Activated CD4-positive, alpha-beta T cell treated with anti-CD3 and anti-CD28 coated beads for 36 hours (primary cell): ENCODE measurements at regions of chr11 and their contacts with region 1.

Region 1: GRCh38 chr11:66288671-66289547 is at the start of gene YIF1A:
- DNase-seq: peak; percentile 99
- ATAC-seq: peak; percentile 97
- H3K4me3 Mint-ChIP-seq: peak within 1 kb of the TSS; percentile 89
- H3K27ac Mint-ChIP-seq: peak within 1 kb of the TSS; percentile 85
- H3K4me1 Mint-ChIP-seq: peaks cover 22% of the 10 kb centered on the region
- H3K27me3 Mint-ChIP-seq: peaks cover 8% of the 10 kb centered on the region
- total RNA-seq, gene YIF1A: 47.5 to 49.8 TPM

Region 2: GRCh38 chr11:65961232-65961901 is 327.5 kb before region 1 on chr11 and contains the start of gene SART1:
- CTCF ChIA-PET with region 1: no interaction called
- POLR2A ChIA-PET with region 1: no interaction called
- intact Hi-C with region 1: loop called in 1 of 2 experiments (anchors 1 kb)
- DNase-seq: peak; percentile 98
- ATAC-seq: peak; percentile 91
- H3K4me3 Mint-ChIP-seq: peak within 1 kb of the TSS; percentile 92
- H3K27ac Mint-ChIP-seq: peak within 1 kb of the TSS; percentile 97
- H3K4me1 Mint-ChIP-seq: peaks cover 37% of the 10 kb centered on the region
- H3K27me3 Mint-ChIP-seq: no peaks in the 10 kb centered on the region
- total RNA-seq, gene SART1: 54.7 to 84.5 TPM

Region 3: DNA sequence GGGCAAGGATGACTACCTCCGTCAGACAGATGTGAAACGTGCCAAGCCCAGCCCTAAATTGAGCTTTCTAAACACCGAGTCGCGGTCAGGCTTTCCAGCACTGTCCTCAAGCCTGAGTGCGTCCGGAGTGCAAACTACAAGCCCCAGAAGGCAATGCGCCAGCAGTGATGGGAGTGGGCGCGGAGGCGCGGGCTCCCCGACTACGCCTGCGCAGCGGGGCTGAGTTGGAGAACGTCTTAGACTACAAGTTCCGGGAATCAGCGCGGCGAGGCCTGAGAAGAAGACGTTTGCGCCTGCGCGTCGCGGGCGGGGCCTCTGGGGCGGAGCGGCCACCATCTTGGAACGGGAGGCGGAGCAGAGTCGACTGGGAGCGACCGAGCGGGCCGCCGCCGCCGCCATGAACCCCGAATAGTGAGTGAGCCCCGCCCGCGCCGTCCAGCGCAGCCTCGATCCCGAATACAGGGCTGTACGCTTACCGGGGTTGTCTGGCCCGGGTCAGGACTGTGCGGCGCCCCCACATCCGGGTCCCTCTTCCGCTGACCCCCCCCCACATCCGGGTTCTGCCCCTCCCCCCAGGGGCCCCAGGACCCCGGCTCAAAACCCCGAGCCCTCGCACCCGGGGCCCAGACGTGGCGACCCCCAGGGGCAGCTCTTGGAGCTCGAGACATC is 20.5 kb before region 1 on chr11 and contains the start of gene RAB1B:
- CTCF ChIA-PET with region 1: no interaction called
- POLR2A ChIA-PET with region 1: interaction called, 5 read pairs
- intact Hi-C with region 1: loop called (anchors 1 kb)
- DNase-seq: peak; percentile 100
- ATAC-seq: peak; percentile 88
- H3K4me3 Mint-ChIP-seq: peak within 1 kb of the TSS; percentile 100
- H3K27ac Mint-ChIP-seq: peak within 1 kb of the TSS; percentile 97
- H3K4me1 Mint-ChIP-seq: peaks cover 28% of the 10 kb centered on the region
- H3K27me3 Mint-ChIP-seq: no peaks in the 10 kb centered on the region
- total RNA-seq, gene RAB1B: 114 to 147 TPM

Region 4: GRCh38 chr11:66344550-66345315 is 55.8 kb after region 1 on chr11 and contains the start of gene BRMS1:
- CTCF ChIA-PET with region 1: interaction called, 3 read pairs
- POLR2A ChIA-PET with region 1: no interaction called
- intact Hi-C with region 1: loop called in 1 of 2 experiments (anchors 1 kb)
- DNase-seq: peak; percentile 98
- ATAC-seq: peak; percentile 80
- H3K4me3 Mint-ChIP-seq: peak within 1 kb of the TSS; percentile 93
- H3K27ac Mint-ChIP-seq: peak within 1 kb of the TSS; percentile 90
- H3K4me1 Mint-ChIP-seq: peaks cover 45% of the 10 kb centered on the region
- H3K27me3 Mint-ChIP-seq: peaks cover 3% of the 10 kb centered on the region
- total RNA-seq, gene BRMS1: 29.2 to 30.2 TPM

Region 5: DNA sequence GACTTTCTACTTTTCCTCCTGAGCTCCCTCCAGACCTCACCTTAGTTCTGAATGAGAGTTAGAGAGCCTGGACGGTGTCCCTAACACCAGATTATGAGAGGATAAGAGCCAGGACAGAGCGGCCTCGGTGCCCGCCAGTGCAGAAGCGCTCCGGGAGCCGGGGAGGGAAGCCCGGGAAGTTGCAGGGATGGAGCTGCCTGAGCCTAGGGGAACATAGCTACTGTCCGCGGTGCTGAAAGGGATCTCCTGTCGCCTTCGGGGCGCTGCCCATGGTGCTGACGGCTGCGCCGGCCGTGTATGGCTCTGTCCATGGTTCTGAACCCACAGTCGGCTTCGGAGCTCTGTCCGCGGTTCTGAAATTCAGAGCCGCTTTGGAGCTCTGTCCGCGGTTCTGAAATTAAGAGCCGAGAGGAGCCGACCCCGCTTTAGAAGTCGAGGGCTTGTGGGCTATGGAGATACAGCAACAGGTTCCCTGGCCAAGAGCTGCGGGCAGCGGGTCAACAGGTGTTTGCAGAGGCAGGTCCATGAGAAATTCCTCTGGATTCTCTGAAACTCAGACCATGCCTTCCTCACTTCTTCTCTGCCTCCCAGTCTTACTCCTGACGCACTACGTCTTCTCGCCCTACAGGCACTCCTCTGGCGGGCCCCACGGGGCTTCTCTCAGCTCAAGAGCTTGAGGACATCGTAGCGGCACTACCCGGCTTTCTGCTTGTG is 132.7 kb after region 1 on chr11:
- CTCF ChIA-PET with region 1: interaction called, 6 read pairs
- POLR2A ChIA-PET with region 1: interaction called, 4 read pairs
- intact Hi-C with region 1: loop called (anchors 1 kb)
- DNase-seq: peak; percentile 93
- ATAC-seq: peak; percentile 40
- H3K4me3 Mint-ChIP-seq: no peak overlapping the region
- H3K27ac Mint-ChIP-seq: no peak overlapping the region
- H3K4me1 Mint-ChIP-seq: peaks cover 30% of the 10 kb centered on the region
- H3K27me3 Mint-ChIP-seq: peaks cover 35% of the 10 kb centered on the region

Region 6: GRCh38 chr11:66638177-66639065 is 349.5 kb after region 1 on chr11 and contains the start of gene RBM4:
- CTCF ChIA-PET with region 1: interaction called, 4 read pairs
- POLR2A ChIA-PET with region 1: no interaction called
- intact Hi-C with region 1: loop called in 1 of 2 experiments (anchors 1 kb)
- DNase-seq: peak; percentile 97
- ATAC-seq: peak; percentile 95
- H3K4me3 Mint-ChIP-seq: peak within 1 kb of the TSS; percentile 89
- H3K27ac Mint-ChIP-seq: peak within 1 kb of the TSS; percentile 97
- H3K4me1 Mint-ChIP-seq: peaks cover 65% of the 10 kb centered on the region
- H3K27me3 Mint-ChIP-seq: no peaks in the 10 kb centered on the region
- total RNA-seq, gene RBM4: 104 to 122 TPM